ENCODE measurements at regions of chr3 and their contacts with region 1.

Region 1: GRCh38 chr3:191030491-191030890 is 168.0 kb upstream of the GMNC start:
- DNase-seq: no peak
- ATAC-seq: no peak
- H3K4me3 ChIP-seq: no peak overlapping the region
- H3K27ac ChIP-seq: no peak overlapping the region
- H3K4me1 ChIP-seq: no peaks in the 10 kb centered on the region
- H3K27me3 ChIP-seq: no peaks in the 10 kb centered on the region
- CTCF ChIP-seq: no peak
- POLR2A ChIP-seq: no peak

Region 2: DNA sequence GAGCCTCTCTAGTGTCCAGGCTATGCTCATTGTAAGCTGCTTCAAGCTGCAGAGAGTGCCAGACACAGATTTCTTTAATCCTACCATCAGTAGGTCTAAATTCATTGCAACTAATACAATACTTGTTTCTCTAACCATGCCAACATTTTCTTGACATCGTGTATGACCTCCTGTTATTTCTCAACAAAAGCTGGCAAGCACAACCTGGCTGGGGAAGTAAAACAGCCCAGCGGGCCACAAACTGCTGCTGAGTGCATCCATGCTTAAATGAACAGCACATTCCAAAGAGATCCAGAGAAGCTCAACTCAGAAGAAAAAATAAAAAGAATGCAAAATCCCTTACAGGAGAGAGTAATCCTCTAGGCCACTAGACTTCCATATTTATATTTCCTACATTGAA is 204.5 kb before region 1 on chr3:
- intact Hi-C with region 1: loop called in 1 of 10 experiments (anchors 10 kb)
- DNase-seq: no peak
- ATAC-seq: no peak
- H3K4me3 ChIP-seq: no peak overlapping the region
- H3K27ac ChIP-seq: no peak overlapping the region
- H3K4me1 ChIP-seq: no peaks in the 10 kb centered on the region
- H3K27me3 ChIP-seq: no peaks in the 10 kb centered on the region
- CTCF ChIP-seq: no peak
- POLR2A ChIP-seq: no peak

Region 3: DNA sequence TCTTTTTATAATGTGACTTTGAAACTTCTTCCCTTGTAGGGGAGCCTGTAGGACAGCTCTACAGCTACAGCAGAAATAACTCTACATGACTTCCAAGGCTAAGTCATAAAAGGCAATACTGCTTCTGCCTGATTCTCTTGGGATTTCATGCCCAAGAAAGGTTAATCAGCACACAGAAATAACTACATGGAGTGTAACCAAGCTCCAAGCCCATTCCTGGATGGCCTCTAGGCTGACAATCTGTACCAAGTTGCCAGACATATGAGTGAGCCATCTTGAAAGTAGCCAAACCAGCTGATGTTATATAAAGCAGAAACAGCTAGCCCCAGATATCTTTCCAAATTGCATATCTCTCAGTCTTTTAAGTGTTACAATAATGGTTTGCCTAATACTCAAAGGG is 92.7 kb after region 1 on chr3:
- intact Hi-C with region 1: no loop called
- DNase-seq: no peak
- ATAC-seq: no peak
- H3K4me3 ChIP-seq: no peak overlapping the region
- H3K27ac ChIP-seq: no peak overlapping the region
- H3K4me1 ChIP-seq: no peaks in the 10 kb centered on the region
- H3K27me3 ChIP-seq: no peaks in the 10 kb centered on the region
- CTCF ChIP-seq: no peak
- POLR2A ChIP-seq: no peak

Region 4: DNA sequence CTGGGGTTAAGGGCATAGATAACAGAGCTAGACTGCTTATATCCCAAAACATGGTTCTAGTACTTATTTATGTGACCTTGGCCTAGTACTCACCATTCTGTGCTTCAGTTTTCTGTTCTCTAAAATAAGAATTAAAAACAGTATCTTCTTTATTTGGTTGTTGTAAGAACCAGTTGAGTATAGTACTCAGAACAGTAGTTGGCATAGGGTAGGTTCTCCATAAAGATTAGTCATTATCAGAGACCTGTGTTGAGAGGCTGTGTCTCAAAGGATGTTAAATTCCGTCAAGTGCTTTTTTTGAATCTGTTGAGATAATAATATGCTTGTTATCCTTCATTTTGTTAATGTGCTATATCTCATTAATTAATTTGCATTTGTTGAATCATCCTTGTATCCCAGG is 121.2 kb after region 1 on chr3:
- intact Hi-C with region 1: no loop called
- DNase-seq: no peak
- ATAC-seq: no peak
- H3K4me3 ChIP-seq: no peak overlapping the region
- H3K27ac ChIP-seq: no peak overlapping the region
- H3K4me1 ChIP-seq: no peaks in the 10 kb centered on the region
- H3K27me3 ChIP-seq: no peaks in the 10 kb centered on the region
- CTCF ChIP-seq: no peak
- POLR2A ChIP-seq: no peak